Posterior vena cava (tissue), 2 donors: ENCODE measurements at regions of chr2 and their contacts with region 1.

Region 1: DNA sequence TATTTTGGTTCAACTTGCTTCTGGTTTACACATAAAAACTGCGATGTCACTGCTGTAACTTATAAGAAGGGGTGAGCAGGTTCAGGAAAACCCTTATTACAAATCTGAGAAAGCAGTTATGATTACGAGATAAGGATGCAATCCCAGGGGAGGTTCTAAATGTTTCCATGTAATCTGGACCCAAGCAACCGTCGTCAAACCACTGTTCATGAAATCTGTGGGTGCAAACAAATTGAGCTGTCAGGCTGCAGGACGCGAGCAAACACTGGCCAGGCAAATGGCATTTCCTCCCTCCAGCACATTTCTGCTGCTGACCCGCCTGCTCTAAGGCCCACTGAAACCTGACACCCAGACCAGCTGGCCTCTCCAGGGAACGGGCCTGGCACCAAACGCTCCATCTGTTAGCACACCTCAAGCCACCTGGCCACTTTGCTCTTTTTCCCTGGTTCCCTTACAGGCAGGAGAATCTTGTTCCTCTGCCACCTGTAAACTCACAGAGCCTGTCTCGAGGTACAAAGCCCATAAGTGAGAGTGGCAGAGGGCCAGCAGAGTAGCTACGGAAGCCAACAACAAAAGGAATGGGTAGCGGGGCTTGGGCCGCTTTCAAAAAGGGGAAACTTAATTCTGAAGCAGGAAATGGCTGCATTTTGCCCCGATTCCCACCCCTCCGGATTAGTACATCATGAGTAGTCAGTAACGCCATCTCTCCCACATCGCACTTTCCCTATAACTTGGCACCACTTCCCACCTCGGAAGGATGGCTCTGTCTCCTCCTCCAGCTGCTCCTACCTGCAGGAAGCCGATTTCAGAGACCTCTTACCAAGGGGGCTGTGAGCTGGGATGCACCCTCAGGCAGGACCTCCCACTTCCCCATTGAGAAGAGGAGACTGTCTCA is 26.5 kb downstream of the CRACDL start:
- DNase-seq: peak; percentile 62

Region 2: GRCh38 chr2:98928242-98928641 is 18.7 kb after region 1 on chr2:
- intact Hi-C with region 1: loop called in 1 of 2 experiments (anchors 2 kb)
- DNase-seq: no peak